ENCODE measurements at regions of chr2 and their contacts with region 1.

Region 1: GRCh38 chr2:201176081-201176481 is 6.9 kb upstream of the CASP10 start:
- DNase-seq: peak; percentile 77
- H3K4me3 Mint-ChIP-seq: peak overlapping the region; percentile 39
- H3K27ac Mint-ChIP-seq: peak overlapping the region; percentile 88
- H3K4me1 Mint-ChIP-seq: peaks cover 41% of the 10 kb centered on the region
- H3K27me3 Mint-ChIP-seq: no peaks in the 10 kb centered on the region
- CTCF ChIP-seq: no peak

Region 2: GRCh38 chr2:200963124-200963917 is 212.8 kb before region 1 on chr2 and contains the start of gene ORC2:
- CTCF ChIA-PET with region 1: no interaction called
- intact Hi-C with region 1: loop called (anchors 5 kb)
- DNase-seq: peak; percentile 97
- H3K4me3 Mint-ChIP-seq: peak within 1 kb of the TSS; percentile 90
- H3K27ac Mint-ChIP-seq: peak within 1 kb of the TSS; percentile 88
- H3K4me1 Mint-ChIP-seq: peaks cover 48% of the 10 kb centered on the region
- H3K27me3 Mint-ChIP-seq: no peaks in the 10 kb centered on the region
- CTCF ChIP-seq: peak; percentile 77
- total RNA-seq, gene ORC2: 38.8 and 49.6 TPM in 2 replicates

Region 3: GRCh38 chr2:201007561-201007998 is 168.5 kb before region 1 on chr2:
- CTCF ChIA-PET with region 1: no interaction called
- intact Hi-C with region 1: loop called (anchors 2 kb)
- DNase-seq: peak; percentile 64
- H3K4me3 Mint-ChIP-seq: peak overlapping the region; percentile 26
- H3K27ac Mint-ChIP-seq: peak overlapping the region; percentile 74
- H3K4me1 Mint-ChIP-seq: peaks cover 24% of the 10 kb centered on the region
- H3K27me3 Mint-ChIP-seq: no peaks in the 10 kb centered on the region
- CTCF ChIP-seq: no peak

Region 4: DNA sequence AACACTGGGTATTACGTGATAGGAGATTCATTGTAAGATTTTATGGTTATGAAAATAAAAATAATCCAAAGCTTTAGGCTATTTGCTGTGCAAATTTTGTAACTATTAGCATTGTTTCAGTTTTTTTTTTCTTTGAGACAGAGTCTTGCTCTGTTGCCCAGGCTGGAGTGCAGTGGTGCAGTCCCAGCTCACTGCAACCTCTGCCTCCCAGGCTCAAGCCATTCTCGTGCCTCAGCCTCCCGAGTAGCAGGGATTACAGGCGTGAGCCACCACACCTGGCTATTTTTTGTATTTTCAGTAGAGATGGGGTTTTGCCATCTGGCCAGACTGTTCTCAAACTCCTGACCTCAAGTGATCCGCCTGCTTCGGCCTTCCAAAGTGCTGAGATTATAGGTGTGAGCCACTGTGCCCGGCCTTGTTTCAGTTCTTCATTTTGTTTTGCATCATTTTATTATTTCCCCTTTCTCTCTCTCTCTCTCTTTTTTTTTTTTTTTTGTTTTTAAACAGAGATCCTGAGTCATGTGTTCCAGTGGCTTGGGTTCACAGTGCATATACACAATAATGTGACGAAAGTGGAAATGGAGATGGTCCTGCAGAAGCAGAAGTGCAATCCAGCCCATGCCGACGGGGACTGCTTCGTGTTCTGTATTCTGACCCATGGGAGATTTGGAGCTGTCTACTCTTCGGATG is 32.6 kb after region 1 on chr2:
- CTCF ChIA-PET with region 1: no interaction called
- intact Hi-C with region 1: no loop called
- DNase-seq: no peak
- H3K4me3 Mint-ChIP-seq: no peak overlapping the region
- H3K27ac Mint-ChIP-seq: no peak overlapping the region
- H3K4me1 Mint-ChIP-seq: no peaks in the 10 kb centered on the region
- H3K27me3 Mint-ChIP-seq: no peaks in the 10 kb centered on the region
- CTCF ChIP-seq: no peak

Measured in Calu3 (cell line).